Endothelial cell of umbilical vein (primary cell): ENCODE measurements at regions of chr12 and their contacts with region 1.

Region 1: GRCh38 chr12:65986047-65986446 is 144.5 kb downstream of the LLPH start:
- DNase-seq: peak; percentile 28
- H3K4me3 ChIP-seq: no peak overlapping the region
- H3K27ac ChIP-seq: no peak overlapping the region
- H3K4me1 ChIP-seq: no peaks in the 10 kb centered on the region
- H3K27me3 ChIP-seq: no peaks in the 10 kb centered on the region
- CTCF ChIP-seq: peak in 1 of 2 donors; percentile 12
- POLR2A ChIP-seq: no peak

Region 2: DNA sequence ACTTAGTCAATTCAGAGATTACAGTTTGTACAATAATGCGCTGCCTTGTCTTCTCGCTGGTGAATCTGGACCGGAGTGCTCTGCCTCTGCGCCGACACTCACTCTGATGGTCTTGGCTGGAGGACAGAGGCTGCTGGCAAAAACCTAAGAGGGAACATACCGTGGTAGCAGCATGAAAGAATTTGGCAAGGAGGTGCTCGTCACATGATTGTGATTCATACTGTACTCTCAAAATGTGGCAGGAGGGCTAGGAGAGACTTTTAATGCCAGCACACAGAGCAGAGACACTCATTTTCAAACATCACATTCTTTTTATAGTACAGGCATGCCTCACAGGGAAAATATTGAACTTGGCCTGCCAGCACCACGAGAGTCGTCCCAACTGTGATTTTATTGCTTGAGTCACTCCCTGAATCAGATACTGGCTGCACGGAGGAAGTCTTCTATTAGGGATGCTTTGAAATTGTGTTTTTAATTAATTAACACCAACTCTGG is 94.0 kb before region 1 on chr12:
- CTCF ChIA-PET with region 1: no interaction called
- POLR2A ChIA-PET with region 1: no interaction called
- dilution Hi-C with region 1: no loop called
- intact Hi-C with region 1: loop called (anchors 1 kb)
- DNase-seq: peak; percentile 91
- H3K4me3 ChIP-seq: peak overlapping the region in 1 of 3 experiments; percentile 17
- H3K27ac ChIP-seq: peak overlapping the region; percentile 96
- H3K4me1 ChIP-seq: peaks cover 45% of the 10 kb centered on the region
- H3K27me3 ChIP-seq: no peaks in the 10 kb centered on the region
- CTCF ChIP-seq: no peak
- POLR2A ChIP-seq: peak; percentile 55

Region 3: DNA sequence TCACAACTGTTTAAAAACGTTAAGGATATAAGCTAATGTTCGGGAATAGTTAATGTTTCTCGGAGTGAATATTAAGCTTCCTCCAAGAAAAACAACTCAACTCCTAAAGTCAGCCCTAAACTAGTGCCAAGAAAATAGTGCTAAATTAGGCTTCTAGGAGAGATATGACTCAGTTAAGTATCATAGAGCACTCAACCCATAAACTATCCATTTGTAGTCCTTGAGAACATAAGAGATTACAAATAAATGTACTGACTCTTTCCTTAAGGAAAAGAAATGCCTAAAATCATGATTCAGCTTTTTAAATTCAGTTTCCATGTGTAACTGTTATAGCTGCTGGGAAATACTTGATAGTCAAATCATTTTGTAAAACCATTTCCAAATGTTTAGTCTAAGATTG is 44.7 kb before region 1 on chr12:
- CTCF ChIA-PET with region 1: no interaction called
- POLR2A ChIA-PET with region 1: no interaction called
- dilution Hi-C with region 1: no loop called
- intact Hi-C with region 1: loop called (anchors 2 kb)
- DNase-seq: peak; percentile 79
- H3K4me3 ChIP-seq: no peak overlapping the region
- H3K27ac ChIP-seq: peak overlapping the region; percentile 82
- H3K4me1 ChIP-seq: peaks cover 62% of the 10 kb centered on the region
- H3K27me3 ChIP-seq: no peaks in the 10 kb centered on the region
- CTCF ChIP-seq: no peak
- POLR2A ChIP-seq: no peak

Region 4: DNA sequence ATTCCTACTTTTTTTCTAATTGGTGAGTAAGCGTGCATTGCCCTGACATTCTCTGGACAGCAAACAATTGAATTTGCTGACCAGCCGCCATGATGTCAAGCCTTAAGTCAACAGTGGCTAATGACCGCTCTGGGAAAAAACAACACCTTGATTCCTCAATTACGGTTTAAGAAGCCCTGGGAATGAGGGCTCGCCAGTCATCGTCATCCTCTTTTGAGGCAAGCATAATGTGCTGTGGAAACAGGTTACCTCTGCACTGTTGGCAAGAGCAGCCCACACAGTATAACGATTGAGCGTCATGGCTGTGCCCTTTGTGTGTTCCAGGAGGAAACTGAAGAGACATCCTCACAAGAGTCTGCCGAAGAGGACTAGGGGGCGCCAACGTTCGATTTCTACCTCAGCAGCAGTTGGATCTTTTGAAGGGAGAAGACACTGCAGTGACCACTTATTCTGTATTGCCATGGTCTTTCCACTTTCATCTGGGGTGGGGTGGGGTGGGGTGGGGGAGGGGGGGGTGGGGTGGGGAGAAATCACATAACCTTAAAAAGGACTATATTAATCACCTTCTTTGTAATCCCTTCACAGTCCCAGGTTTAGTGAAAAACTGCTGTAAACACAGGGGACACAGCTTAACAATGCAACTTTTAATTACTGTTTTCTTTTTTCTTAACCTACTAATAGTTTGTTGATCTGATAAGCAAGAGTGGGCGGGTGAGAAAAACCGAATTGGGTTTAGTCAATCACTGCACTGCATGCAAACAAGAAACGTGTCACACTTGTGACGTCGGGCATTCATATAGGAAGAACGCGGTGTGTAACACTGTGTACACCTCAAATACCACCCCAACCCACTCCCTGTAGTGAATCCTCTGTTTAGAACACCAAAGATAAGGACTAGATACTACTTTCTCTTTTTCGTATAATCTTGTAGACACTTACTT is 22.9 kb before region 1 on chr12:
- CTCF ChIA-PET with region 1: no interaction called
- POLR2A ChIA-PET with region 1: no interaction called
- dilution Hi-C with region 1: no loop called
- intact Hi-C with region 1: loop called (anchors 1 kb)
- DNase-seq: peak; percentile 85
- H3K4me3 ChIP-seq: no peak overlapping the region
- H3K27ac ChIP-seq: peak overlapping the region; percentile 70
- H3K4me1 ChIP-seq: peaks cover 36% of the 10 kb centered on the region
- H3K27me3 ChIP-seq: no peaks in the 10 kb centered on the region
- CTCF ChIP-seq: peak; percentile 7 to 11
- POLR2A ChIP-seq: no peak

Region 5: GRCh38 chr12:66107451-66107915 is 121.4 kb after region 1 on chr12:
- CTCF ChIA-PET with region 1: no interaction called
- POLR2A ChIA-PET with region 1: no interaction called
- dilution Hi-C with region 1: no loop called
- intact Hi-C with region 1: loop called (anchors 5 kb)
- DNase-seq: peak; percentile 89
- H3K4me3 ChIP-seq: no peak overlapping the region
- H3K27ac ChIP-seq: no peak overlapping the region
- H3K4me1 ChIP-seq: peaks cover 2% of the 10 kb centered on the region
- H3K27me3 ChIP-seq: peaks cover 9 to 17% of the 10 kb centered on the region in 2 experiments
- CTCF ChIP-seq: peak; percentile 56 to 70
- POLR2A ChIP-seq: no peak